ENCODE measurements at regions of chr20 and their contacts with region 1.

Region 1: DNA sequence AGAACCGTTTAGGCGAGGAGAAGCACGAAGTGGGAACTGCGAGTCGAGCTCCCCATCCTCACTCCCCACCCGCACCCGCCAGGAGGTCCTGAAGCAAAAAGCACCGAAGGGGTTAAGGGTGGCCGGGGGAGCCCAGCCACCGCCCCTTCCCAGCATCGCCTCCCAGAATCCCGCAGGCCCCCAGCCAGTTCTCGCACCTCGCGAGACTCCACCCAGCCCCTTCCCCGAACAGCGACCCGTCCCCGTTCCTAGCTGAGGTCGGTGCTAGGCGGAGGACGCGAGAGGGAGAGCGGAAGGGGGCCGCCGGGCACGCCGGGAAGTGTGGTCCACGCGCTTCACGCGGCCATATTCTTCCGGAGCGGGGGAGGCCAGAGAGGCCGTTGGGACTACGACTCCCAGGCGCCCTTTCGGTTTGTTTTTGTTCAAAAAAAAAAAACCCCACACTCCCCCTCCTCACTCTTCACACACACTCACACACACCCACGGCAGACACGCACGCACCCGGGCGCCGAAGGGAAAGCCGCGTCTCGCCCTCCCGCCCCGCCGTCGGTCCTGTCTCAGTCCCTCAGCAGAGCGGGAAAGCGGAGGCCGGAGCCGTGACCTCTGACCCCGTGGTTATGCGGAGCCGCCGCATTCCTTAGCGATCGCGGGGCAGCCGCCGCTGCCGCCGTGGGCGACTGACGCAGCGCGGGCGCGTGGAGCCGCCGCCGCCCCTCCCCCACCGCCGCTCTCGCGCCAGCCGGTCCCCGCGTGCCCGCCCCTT is at the start of gene ASXL1:
- DNase-seq: peak; percentile 79 to 96 (median 93)
- ATAC-seq: peak; percentile 89
- H3K4me3 ChIP-seq: peak within 1 kb of the TSS; percentile 72 to 84
- H3K4me3 Mint-ChIP-seq: peak within 1 kb of the TSS; percentile 95
- H3K27ac ChIP-seq: peak within 1 kb of the TSS; percentile 89 to 91
- H3K27ac Mint-ChIP-seq: peak within 1 kb of the TSS; percentile 97
- H3K4me1 ChIP-seq: peaks cover 41% of the 10 kb centered on the region
- H3K4me1 Mint-ChIP-seq: peaks cover 47% of the 10 kb centered on the region
- H3K27me3 ChIP-seq: no peaks in the 10 kb centered on the region
- H3K27me3 Mint-ChIP-seq: no peaks in the 10 kb centered on the region
- CTCF ChIP-seq: no peak
- total RNA-seq, gene ASXL1: 197 to 200 TPM

Region 2: DNA sequence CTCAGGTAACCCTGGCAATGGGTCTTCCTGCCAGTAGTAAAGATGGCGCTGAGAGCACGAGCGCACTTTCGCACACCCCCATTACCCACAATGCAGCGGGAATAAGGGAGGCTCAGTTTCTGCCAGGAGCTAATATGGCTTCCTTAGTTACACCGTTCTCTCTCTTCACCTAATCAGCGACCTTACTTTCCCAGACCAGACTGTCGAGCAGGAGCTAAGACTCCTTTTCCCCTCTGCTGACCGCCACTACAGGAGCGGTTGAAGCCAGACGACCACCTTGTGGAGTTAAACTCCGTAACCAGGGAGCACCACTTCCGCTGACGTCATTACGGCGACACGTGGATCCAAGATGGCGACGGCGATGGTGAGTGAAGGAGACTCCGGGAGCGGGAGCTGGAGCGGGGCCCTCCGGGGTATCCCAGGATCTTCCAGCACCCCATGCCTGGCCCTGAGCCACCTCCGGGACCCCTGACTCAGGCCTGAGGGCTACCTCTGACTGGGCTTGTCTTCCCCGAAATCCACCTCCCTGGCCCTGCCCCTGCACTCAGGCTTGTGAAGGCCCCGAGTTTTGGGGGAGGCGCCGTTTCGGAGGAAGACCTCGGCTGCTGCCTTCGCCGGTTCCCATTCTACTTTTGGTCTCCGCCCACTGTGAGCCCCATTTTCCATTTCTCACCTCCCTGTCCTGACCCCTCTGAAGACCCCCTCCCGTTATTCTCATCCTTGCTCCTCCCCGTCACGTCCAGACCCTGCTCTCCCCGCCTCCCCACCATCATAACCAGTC is 248.5 kb before region 1 on chr20 and contains the start of gene TM9SF4:
- CTCF ChIA-PET with region 1: no interaction called
- POLR2A ChIA-PET with region 1: no interaction called
- intact Hi-C with region 1: loop called in 1 of 2 experiments (anchors 1 kb)
- DNase-seq: peak; percentile 74 to 97 (median 91)
- ATAC-seq: peak; percentile 89
- H3K4me3 ChIP-seq: peak within 1 kb of the TSS; percentile 65 to 90
- H3K4me3 Mint-ChIP-seq: peak within 1 kb of the TSS; percentile 95
- H3K27ac ChIP-seq: peak within 1 kb of the TSS; percentile 91 to 99
- H3K27ac Mint-ChIP-seq: peak within 1 kb of the TSS; percentile 100
- H3K4me1 ChIP-seq: peaks cover 23% of the 10 kb centered on the region
- H3K4me1 Mint-ChIP-seq: peaks cover 37% of the 10 kb centered on the region
- H3K27me3 ChIP-seq: no peaks in the 10 kb centered on the region
- H3K27me3 Mint-ChIP-seq: no peaks in the 10 kb centered on the region
- CTCF ChIP-seq: no peak
- total RNA-seq, gene TM9SF4: 27.5 to 29.2 TPM

Region 3: DNA sequence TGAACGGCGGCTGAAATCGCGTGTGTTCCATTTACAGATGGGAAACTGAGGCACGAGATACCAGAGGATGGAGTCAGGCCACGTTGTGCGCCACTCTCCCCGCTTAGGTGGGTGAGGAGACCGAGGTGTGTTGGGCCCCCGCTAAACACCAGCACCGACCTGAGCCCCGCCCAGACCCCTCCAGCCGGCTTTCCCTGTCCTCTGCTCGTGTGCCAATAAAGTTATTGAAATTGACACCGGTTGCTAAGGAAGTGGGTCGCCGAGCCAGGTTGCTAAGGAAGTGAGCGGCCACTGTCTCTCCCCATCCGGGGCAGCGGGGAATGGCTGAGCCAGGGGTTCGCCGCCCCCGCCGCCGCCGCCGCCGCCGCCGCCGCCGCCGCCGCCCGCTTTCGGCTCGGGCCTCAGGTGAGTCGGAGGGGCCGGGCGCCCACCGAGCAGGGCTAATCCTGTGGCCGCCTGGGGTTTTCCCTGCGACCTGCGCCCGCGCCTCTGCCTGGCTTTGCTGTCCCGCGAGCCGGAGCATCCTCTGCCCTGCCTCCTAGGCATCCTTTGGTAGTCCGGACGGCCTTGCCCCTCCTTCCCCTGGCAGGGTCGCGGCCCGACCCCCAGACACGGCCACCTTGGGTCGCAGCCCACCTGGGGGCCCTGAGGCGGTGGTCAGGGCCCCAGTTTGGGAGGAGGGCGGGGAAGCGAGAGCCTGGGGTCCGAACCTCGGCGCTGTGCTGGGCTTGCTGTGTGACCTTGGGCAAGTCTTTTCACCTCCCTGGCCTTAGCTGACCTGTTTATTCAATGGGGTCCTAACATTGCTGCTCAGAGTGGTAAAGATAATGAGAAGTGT is 80.5 kb before region 1 on chr20 and contains the start of gene KIF3B:
- CTCF ChIA-PET with region 1: no interaction called
- POLR2A ChIA-PET with region 1: no interaction called
- intact Hi-C with region 1: loop called (anchors 1 to 2 kb)
- DNase-seq: peak; percentile 68 to 94 (median 87)
- ATAC-seq: peak; percentile 85
- H3K4me3 ChIP-seq: peak within 1 kb of the TSS; percentile 91 to 97
- H3K4me3 Mint-ChIP-seq: peak within 1 kb of the TSS; percentile 90
- H3K27ac ChIP-seq: peak within 1 kb of the TSS; percentile 64 to 86
- H3K27ac Mint-ChIP-seq: peak within 1 kb of the TSS; percentile 93
- H3K4me1 ChIP-seq: peaks cover 20% of the 10 kb centered on the region
- H3K4me1 Mint-ChIP-seq: peaks cover 44% of the 10 kb centered on the region
- H3K27me3 ChIP-seq: no peaks in the 10 kb centered on the region
- H3K27me3 Mint-ChIP-seq: no peaks in the 10 kb centered on the region
- CTCF ChIP-seq: no peak
- total RNA-seq, gene KIF3B: 7.1 to 8.1 TPM

Region 4: GRCh38 chr20:32437391-32438074 is 79.5 kb after region 1 on chr20:
- CTCF ChIA-PET with region 1: no interaction called
- POLR2A ChIA-PET with region 1: interaction called, 4 read pairs
- intact Hi-C with region 1: loop called in 1 of 2 experiments (anchors 5 kb)
- DNase-seq: peak in 3 of 9 experiments; percentile 26 to 48 (median 39)
- ATAC-seq: peak; percentile 54
- H3K4me3 ChIP-seq: no peak overlapping the region
- H3K4me3 Mint-ChIP-seq: no peak overlapping the region
- H3K27ac ChIP-seq: no peak overlapping the region
- H3K27ac Mint-ChIP-seq: no peak overlapping the region
- H3K4me1 ChIP-seq: no peaks in the 10 kb centered on the region
- H3K4me1 Mint-ChIP-seq: peaks cover 8% of the 10 kb centered on the region
- H3K27me3 ChIP-seq: no peaks in the 10 kb centered on the region
- H3K27me3 Mint-ChIP-seq: no peaks in the 10 kb centered on the region
- CTCF ChIP-seq: peak; percentile 26

Region 5: GRCh38 chr20:32509639-32510066 is 151.6 kb after region 1 on chr20:
- CTCF ChIA-PET with region 1: interaction called, 4 read pairs
- POLR2A ChIA-PET with region 1: interaction called, 20 read pairs
- intact Hi-C with region 1: loop called in 1 of 2 experiments (anchors 1 kb)
- DNase-seq: peak; percentile 46 to 90 (median 81)
- ATAC-seq: peak; percentile 78
- H3K4me3 ChIP-seq: peak overlapping the region; percentile 51 to 77
- H3K4me3 Mint-ChIP-seq: peak overlapping the region; percentile 88
- H3K27ac ChIP-seq: peak overlapping the region; percentile 69 to 72
- H3K27ac Mint-ChIP-seq: peak overlapping the region; percentile 97
- H3K4me1 ChIP-seq: peaks cover 70% of the 10 kb centered on the region
- H3K4me1 Mint-ChIP-seq: peaks cover 77% of the 10 kb centered on the region
- H3K27me3 ChIP-seq: no peaks in the 10 kb centered on the region
- H3K27me3 Mint-ChIP-seq: no peaks in the 10 kb centered on the region
- CTCF ChIP-seq: no peak

Region 6: DNA sequence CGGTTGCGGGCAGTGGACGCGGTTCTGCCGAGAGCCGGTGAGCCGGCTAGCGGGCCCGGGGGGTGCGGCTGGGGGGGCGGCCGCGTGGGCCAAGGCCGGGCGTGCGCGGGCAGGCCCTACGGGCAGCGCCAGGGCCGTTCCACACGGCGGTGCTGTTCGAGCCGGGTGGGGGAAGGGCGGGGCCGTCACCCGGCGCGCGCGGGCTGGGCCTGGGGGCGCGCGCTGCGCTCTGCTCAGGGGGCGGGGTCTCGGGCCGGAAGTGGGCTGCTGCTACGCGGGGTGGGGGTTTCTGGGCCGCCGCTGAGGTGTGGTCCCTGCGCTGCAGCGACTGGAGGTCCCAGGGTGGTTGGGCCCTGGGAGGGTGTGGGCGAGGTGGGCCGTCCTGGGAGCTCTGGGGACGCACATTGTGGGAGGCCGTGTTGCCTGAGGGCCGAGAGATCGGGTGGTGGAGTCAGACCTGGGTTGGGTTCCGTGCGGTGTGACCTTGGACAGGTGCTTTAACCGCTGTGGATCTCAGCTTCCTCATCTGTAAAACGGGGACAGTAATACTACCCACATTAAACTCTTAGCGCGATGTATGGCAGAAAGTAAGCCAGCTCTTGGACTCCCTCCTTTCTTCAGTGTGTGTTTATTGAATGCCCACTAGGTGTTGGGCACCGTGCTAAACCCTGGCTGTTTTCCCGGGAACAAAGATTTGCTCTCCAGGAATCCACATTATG is 462.1 kb after region 1 on chr20:
- CTCF ChIA-PET with region 1: no interaction called
- POLR2A ChIA-PET with region 1: no interaction called
- intact Hi-C with region 1: loop called in 1 of 2 experiments (anchors 2 kb)
- DNase-seq: peak in 8 of 9 experiments; percentile 78 to 92 (median 86)
- ATAC-seq: peak; percentile 76
- H3K4me3 ChIP-seq: peak overlapping the region; percentile 71 to 72
- H3K4me3 Mint-ChIP-seq: peak overlapping the region; percentile 97
- H3K27ac ChIP-seq: peak overlapping the region; percentile 88 to 93
- H3K27ac Mint-ChIP-seq: peak overlapping the region; percentile 98
- H3K4me1 ChIP-seq: peaks cover 41% of the 10 kb centered on the region
- H3K4me1 Mint-ChIP-seq: peaks cover 42% of the 10 kb centered on the region
- H3K27me3 ChIP-seq: no peaks in the 10 kb centered on the region
- H3K27me3 Mint-ChIP-seq: no peaks in the 10 kb centered on the region
- CTCF ChIP-seq: no peak

Measured in CD8-positive, alpha-beta T cell (primary cell).